PC-3 (cell line): ENCODE measurements at regions of chr11 and their contacts with region 1.

Region 1: DNA sequence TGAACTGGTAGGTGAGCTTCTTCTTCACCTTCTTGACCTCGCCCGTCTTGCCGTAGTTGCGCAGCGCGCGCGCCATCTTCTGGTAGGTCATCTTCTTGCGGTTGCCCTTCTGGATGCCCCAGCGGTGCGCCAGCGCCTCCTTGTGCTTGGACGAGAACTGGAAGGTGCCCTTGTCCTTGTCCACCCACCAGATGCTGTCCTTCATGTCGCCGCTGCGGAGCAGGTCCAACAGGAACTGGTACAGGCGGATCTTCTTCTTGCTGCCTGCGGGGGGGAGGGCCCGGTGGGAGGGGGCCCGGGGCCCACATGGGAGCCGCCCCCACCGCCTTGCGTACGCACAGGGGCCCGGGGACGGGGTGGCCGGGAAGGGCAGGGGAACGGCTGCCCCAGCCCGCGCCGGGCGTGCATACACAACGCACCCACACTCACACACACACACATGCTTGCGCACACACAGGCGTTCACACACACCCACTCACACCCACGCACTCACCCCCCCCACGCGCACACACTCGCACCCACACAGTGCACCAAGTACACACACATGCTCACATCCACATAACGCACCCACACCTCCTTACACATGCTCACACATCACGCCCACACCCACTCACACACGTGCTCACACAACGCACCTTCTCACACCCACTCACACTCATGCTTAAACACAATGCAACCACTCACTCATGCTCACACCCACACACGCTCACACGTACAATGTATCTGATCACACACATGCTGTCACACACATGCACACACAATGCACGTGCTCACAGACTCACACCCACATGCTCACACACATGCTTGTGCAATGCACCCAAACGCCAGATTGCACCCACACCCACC is 3.0 kb upstream of the MYBPC3 start:
- DNase-seq: peak; percentile 95
- ATAC-seq: peak; percentile 96
- H3K4me3 ChIP-seq: peak overlapping the region; percentile 58
- H3K27ac ChIP-seq: no peak overlapping the region
- H3K4me1 ChIP-seq: no peaks in the 10 kb centered on the region
- H3K27me3 ChIP-seq: no peaks in the 10 kb centered on the region
- CTCF ChIP-seq: peak; percentile 98

Region 2: DNA sequence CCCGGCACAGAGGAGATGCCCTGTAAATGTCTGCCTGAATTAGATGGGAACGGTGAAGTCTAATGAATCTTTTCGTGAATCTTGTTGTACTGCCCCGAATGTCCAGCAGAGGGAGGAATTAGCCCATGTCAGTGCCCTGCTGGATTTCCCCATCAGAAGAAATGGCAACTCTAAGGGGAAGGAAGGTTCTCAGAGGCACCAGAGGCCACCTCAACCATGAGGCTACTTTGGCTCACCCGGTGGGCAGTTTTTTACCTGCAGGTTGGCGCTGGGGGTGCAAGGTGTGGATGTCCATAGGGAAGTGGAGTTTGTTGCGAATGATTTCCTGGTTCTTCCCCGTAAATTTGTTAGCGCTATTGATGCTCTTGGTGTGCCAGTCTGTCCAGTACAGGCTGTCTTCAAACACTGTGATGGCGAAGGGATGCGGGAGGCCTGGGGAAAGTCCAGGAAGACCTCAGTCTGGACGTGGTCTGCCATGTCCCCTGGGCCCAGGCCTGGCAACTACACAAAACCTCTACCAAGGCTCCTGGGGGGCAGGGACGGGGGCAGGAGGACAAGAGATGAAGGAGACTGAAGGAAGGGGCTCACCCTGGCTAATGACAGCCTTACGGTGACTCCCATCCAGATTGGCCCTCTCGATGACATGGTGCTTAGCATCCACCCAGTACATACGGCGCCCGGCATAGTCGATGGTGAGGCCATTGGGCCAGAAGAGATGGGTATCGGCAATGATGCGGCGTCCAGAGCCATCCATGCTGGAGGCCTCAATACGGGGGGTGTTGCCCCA is 465.6 kb before region 1 on chr11:
- CTCF ChIA-PET with region 1: no interaction called
- POLR2A ChIA-PET with region 1: no interaction called
- intact Hi-C with region 1: loop called (anchors 1 kb)
- DNase-seq: peak; percentile 83
- ATAC-seq: peak; percentile 83
- H3K4me3 ChIP-seq: no peak overlapping the region
- H3K27ac ChIP-seq: no peak overlapping the region
- H3K4me1 ChIP-seq: no peaks in the 10 kb centered on the region
- H3K27me3 ChIP-seq: no peaks in the 10 kb centered on the region
- CTCF ChIP-seq: peak; percentile 81

Region 3: DNA sequence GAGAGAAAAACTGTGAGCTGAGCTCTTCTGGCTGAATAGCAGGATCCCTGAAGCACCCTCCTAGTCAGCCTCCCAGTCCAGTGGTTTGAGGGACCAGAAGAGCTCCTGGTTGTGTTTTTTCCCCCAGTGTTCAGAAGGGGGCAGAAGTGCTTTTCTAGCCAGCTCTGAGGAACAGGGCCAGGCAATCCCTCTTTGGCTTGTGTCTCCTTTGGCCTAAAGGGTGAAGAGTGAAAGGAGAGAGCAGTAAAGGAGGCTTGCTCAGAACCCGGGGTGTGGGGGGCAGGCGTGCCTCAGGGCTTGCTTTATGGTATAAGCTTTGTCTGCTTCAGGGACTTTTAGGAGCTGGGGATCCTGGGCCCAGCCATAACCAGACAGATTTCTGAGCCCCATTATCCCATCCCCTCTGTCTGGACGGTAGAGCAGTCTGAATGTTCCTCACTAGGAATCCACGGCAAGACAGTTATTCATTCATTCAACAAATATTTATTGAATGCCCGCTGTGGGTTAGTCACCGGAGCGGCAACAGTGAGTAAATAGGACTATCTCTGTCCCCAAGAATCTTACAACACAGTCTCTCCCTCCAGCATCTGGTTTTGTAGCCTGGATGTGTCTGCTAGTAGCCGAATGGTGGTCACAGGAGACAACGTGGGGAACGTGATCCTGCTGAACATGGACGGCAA is 121.4 kb before region 1 on chr11:
- CTCF ChIA-PET with region 1: interaction called, 4 read pairs
- POLR2A ChIA-PET with region 1: no interaction called
- intact Hi-C with region 1: loop called (anchors 1 kb)
- DNase-seq: peak; percentile 87
- ATAC-seq: peak; percentile 77
- H3K4me3 ChIP-seq: peak overlapping the region; percentile 63
- H3K27ac ChIP-seq: peak overlapping the region; percentile 91
- H3K4me1 ChIP-seq: peaks cover 43% of the 10 kb centered on the region
- H3K27me3 ChIP-seq: no peaks in the 10 kb centered on the region
- CTCF ChIP-seq: peak; percentile 58

Region 4: DNA sequence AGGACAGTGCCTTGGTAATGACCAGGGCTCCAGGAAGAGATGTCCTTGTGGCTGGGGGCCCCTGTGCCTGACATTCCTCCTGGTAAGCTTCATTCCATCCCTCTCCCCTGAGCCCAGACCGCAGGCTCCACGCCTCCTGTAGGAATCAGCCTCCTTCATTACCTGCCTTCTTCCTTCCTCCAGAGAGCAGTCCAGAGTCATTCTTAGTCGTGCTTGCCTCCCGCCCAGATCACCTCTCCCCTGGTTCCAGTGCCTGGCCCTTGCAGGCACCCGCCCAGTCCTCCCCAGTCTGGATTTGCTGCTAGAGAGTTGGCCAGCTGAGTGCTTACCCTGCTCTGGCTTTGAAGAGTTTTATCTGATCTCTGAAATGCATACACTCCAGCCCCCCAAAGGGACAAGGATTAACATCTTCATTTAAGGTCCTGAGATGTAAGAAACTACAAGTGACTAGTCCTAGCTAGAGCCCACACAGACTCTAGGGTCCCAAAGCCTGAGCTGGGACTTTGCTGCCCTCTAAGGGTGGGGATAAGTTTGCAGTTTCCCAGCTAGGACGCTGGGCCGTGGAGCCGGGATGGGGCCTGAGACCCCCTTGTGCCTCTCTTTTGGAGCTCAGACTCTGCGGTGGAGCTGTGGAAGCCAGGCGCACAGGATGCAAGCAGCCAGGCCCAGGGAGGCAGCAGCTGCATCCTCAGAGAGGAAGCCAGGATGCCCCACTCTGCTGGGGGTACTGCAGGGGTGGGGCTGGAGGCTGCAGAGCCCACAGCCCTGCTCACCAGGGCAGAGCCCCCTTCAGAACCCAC is 96.1 kb before region 1 on chr11:
- CTCF ChIA-PET with region 1: interaction called, 20 read pairs
- POLR2A ChIA-PET with region 1: interaction called, 3 read pairs
- intact Hi-C with region 1: loop called (anchors 2 kb)
- DNase-seq: peak; percentile 82
- ATAC-seq: peak; percentile 96
- H3K4me3 ChIP-seq: peak overlapping the region; percentile 26; the same call in 1 of the 2 replicates
- H3K27ac ChIP-seq: peak overlapping the region; percentile 46
- H3K4me1 ChIP-seq: peaks cover 37% of the 10 kb centered on the region
- H3K27me3 ChIP-seq: no peaks in the 10 kb centered on the region
- CTCF ChIP-seq: peak; percentile 86

Region 5: DNA sequence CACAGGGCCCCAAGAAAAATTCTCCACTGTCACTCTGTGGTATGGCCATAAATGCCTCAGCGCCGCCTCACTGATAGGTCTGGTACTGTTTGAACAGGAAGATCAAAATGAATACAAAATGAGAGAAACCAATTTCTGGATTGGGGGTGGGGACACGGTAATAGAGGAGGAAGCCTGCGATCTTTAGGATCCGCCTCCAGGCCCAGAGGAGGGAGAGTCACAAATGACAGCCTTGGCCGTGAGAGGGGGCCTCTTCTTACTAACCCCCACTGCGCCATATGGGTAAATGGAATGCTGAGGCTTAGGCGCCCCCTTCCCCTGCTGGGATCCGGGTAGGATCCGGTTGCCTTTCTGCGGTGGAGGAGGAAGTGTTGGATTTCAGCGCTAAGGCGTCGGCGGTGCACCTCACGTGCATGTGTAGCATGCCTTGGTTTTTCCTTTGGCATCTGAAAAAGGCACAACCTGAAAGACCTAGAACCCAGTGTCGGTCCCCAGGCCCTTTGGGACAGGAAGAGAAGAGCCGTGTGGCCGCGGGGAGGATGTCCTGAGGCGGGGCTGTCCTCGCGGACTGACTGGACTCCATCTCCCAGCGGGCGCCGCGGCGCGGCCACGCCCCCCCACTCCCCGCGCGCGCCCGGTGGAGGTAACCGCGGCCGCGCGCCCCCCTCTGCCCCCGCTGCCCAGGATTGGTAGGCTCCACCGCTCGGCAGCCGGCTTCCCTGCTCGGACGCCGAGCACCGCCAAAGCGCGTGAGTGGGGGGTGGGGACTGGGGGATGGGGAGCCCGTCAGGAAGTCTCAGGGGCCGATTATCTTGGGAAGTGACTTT is 86.3 kb before region 1 on chr11:
- CTCF ChIA-PET with region 1: interaction called, 8 read pairs
- POLR2A ChIA-PET with region 1: no interaction called
- intact Hi-C with region 1: loop called (anchors 2 kb)
- DNase-seq: peak; percentile 83
- ATAC-seq: peak; percentile 70
- H3K4me3 ChIP-seq: peak overlapping the region; percentile 71
- H3K27ac ChIP-seq: peak overlapping the region; percentile 82
- H3K4me1 ChIP-seq: peaks cover 30% of the 10 kb centered on the region
- H3K27me3 ChIP-seq: no peaks in the 10 kb centered on the region
- CTCF ChIP-seq: no peak

Region 6: DNA sequence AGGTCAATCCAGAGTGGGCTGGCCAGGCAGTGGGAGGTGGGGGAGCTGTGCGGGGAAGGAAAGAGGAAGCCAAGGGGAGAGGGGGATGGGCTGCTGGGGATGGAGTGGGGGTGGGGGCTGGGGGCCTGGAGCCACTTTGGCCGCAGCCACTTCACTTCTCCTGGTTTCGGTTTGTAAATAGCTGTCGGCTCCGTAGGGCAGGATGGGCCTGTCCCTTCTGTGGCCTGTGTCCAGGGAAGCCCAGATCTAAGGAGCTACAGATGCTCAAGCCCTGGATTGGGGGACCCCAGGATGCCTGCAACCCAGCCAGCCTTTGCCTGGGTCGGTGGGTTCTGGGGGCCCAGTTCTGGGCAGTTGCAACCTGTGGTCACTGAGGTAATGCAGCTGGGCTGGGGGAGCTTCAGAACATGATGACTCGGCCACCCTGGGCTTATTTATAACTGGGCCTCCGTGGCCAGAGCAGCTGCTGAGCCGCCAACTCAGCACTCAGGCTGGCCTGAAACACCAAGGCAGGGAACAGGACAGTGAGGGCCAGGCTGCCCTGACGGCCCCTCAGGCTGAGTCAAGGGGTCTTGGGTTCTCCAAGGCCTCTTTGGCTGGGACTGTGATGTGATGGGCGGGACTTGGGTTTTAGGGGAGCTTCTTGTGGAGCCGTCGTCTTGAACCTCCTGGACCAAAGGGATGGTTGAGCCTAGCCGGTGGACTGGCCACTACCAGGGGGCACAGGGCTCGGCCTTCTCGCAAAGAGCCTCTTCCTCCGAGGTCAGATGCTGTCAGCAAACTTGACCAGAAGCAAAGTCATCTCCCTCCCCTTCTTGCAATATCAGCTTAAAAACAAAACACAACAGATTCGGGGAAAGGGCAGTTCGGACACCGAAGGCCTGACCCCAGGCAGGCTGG is 37.9 kb after region 1 on chr11:
- CTCF ChIA-PET with region 1: no interaction called
- POLR2A ChIA-PET with region 1: no interaction called
- intact Hi-C with region 1: no loop called
- DNase-seq: no peak
- ATAC-seq: no peak
- H3K4me3 ChIP-seq: no peak overlapping the region
- H3K27ac ChIP-seq: no peak overlapping the region
- H3K4me1 ChIP-seq: no peaks in the 10 kb centered on the region
- H3K27me3 ChIP-seq: no peaks in the 10 kb centered on the region
- CTCF ChIP-seq: no peak